ENCODE measurements at regions of chr12 and their contacts with region 1.

Region 1: DNA sequence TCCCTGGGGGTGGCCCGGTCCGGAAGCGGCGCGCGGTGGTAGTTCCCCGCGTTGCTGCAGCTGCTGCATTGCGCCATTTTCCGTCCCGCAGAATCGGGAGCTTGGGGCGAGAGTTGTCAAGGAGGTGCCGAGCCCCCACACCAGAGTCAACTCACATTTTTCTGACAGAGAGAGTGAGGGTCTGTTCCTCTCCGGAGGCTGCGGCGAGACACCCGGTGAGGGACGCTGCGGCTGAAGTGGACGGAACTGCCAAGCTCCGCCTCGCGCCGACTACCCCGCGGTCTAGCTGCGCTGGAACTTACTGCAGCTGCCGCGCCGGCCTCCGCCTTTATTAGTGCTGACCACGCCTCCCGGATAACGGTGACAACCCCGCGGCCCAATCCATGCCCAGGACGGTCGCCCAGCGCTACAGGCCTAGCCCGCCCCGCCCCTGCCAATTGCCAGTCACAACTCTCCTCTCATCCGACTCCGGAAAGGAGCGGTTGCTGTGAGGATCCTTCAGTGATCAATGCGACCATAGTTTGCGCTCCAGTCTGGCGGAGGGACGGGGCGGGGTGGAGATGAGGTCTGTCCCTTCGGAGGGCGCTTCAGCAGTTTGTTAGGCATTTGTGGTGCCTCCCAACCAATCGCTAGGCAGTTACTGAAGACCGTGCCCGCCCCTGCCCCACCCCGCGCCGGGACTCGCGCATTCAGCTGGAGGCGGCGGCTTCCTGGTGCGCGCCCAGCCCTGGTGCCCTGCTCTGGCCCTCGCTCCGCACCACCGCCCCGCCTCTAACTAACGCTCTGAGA is at the start of gene VAMP1:
- DNase-seq: peak; percentile 96
- H3K4me3 Mint-ChIP-seq: peak within 1 kb of the TSS; percentile 72
- H3K27ac Mint-ChIP-seq: peak within 1 kb of the TSS; percentile 87
- H3K4me1 Mint-ChIP-seq: peaks cover 13% of the 10 kb centered on the region
- H3K27me3 Mint-ChIP-seq: no peaks in the 10 kb centered on the region
- CTCF ChIP-seq: no peak
- total RNA-seq, gene VAMP1: 2.5 and 2.9 TPM in 2 replicates

Region 2: DNA sequence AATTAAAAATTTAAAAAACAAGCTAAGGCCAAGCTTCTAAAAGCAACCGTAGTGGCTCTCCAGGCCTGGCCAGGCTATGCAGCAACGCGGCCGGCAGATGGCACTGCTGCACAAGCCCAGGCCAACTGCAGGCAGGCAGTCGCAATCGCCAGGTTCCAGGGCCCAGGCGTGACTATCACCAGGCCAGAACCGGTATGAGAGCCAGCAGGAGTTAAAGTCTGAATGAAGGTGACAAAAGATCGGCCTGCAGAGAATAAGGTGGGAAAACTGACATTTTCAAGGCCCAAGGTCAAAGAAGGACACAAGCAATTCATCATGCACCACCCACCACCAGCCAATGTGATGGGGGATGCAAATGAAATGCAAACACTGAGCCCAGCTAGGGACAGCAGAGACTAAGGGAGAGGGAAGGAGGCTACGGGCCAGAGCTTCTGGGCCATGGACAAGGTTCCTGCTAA is 481.9 kb before region 1 on chr12:
- CTCF ChIA-PET with region 1: interaction called, 11 read pairs
- POLR2A ChIA-PET with region 1: no interaction called
- intact Hi-C with region 1: loop called (anchors 5 kb)
- DNase-seq: peak; percentile 66
- H3K4me3 Mint-ChIP-seq: no peak overlapping the region
- H3K27ac Mint-ChIP-seq: no peak overlapping the region
- H3K4me1 Mint-ChIP-seq: no peaks in the 10 kb centered on the region
- H3K27me3 Mint-ChIP-seq: no peaks in the 10 kb centered on the region
- CTCF ChIP-seq: peak; percentile 97

Region 3: GRCh38 chr12:6335451-6336078 is 135.0 kb before region 1 on chr12:
- CTCF ChIA-PET with region 1: interaction called, 13 read pairs
- POLR2A ChIA-PET with region 1: interaction called, 11 read pairs
- intact Hi-C with region 1: loop called (anchors 5 kb)
- DNase-seq: peak; percentile 85
- H3K4me3 Mint-ChIP-seq: no peak overlapping the region
- H3K27ac Mint-ChIP-seq: no peak overlapping the region
- H3K4me1 Mint-ChIP-seq: peaks cover 24% of the 10 kb centered on the region
- H3K27me3 Mint-ChIP-seq: no peaks in the 10 kb centered on the region
- CTCF ChIP-seq: peak; percentile 44

Region 4: GRCh38 chr12:6416596-6416995 is 54.0 kb before region 1 on chr12:
- CTCF ChIA-PET with region 1: interaction called, 59 read pairs
- POLR2A ChIA-PET with region 1: interaction called, 5 read pairs
- intact Hi-C with region 1: no loop called
- DNase-seq: no peak
- H3K4me3 Mint-ChIP-seq: no peak overlapping the region
- H3K27ac Mint-ChIP-seq: no peak overlapping the region
- H3K4me1 Mint-ChIP-seq: no peaks in the 10 kb centered on the region
- H3K27me3 Mint-ChIP-seq: no peaks in the 10 kb centered on the region
- CTCF ChIP-seq: no peak

Region 5: GRCh38 chr12:6435961-6436715 is 34.4 kb before region 1 on chr12:
- CTCF ChIA-PET with region 1: interaction called, 16 read pairs
- POLR2A ChIA-PET with region 1: interaction called, 13 read pairs
- intact Hi-C with region 1: no loop called
- DNase-seq: no peak
- H3K4me3 Mint-ChIP-seq: no peak overlapping the region
- H3K27ac Mint-ChIP-seq: no peak overlapping the region
- H3K4me1 Mint-ChIP-seq: peaks cover 5% of the 10 kb centered on the region
- H3K27me3 Mint-ChIP-seq: no peaks in the 10 kb centered on the region
- CTCF ChIP-seq: no peak

Region 6: GRCh38 chr12:6533923-6534694 is 63.5 kb after region 1 on chr12 and contains the start of gene GAPDH:
- CTCF ChIA-PET with region 1: interaction called, 47 read pairs
- POLR2A ChIA-PET with region 1: interaction called, 54 read pairs
- intact Hi-C with region 1: loop called (anchors 2 kb)
- DNase-seq: peak; percentile 98
- H3K4me3 Mint-ChIP-seq: peak within 1 kb of the TSS; percentile 88
- H3K27ac Mint-ChIP-seq: peak within 1 kb of the TSS; percentile 95
- H3K4me1 Mint-ChIP-seq: peaks cover 34% of the 10 kb centered on the region
- H3K27me3 Mint-ChIP-seq: no peaks in the 10 kb centered on the region
- CTCF ChIP-seq: no peak
- total RNA-seq, gene GAPDH: 2,995 and 4,097 TPM in 2 replicates

Region 7: DNA sequence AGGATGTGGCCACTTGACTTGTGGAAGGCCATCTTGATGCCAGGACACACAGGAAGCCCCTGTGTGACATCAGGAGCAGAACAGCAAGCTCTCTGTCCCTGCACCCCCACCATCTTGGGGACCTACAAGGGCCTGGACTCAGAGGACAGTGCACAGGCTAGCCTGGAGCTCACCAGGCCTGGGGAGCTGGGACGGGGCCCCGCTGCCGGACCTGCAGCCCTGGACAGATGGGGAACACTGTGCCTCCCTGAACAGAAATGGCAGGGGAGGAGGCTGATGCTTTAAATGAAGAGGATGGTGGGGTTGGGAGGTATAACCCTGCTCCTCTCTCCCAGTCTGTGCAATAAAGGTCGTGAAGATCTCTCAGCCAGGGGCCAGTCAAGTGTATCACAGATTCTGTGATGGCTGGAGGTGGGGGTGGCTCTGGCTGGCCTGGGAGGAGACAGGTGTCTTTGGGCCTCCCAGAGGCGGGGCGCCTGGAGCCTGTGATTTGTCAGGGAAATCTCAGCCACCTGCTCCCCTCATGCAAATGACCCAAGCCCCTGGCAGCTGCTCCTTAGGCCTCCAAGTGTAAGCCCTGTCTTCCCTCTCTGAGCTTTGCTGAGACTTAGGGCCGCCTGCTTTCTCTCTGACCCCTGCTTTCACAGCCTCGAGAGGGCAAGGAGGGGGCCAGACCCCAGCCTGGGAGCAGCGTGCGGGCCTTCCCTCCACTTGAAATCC is 369.1 kb after region 1 on chr12:
- CTCF ChIA-PET with region 1: no interaction called
- POLR2A ChIA-PET with region 1: no interaction called
- intact Hi-C with region 1: no loop called
- DNase-seq: no peak
- H3K4me3 Mint-ChIP-seq: no peak overlapping the region
- H3K27ac Mint-ChIP-seq: no peak overlapping the region
- H3K4me1 Mint-ChIP-seq: no peaks in the 10 kb centered on the region
- H3K27me3 Mint-ChIP-seq: no peaks in the 10 kb centered on the region
- CTCF ChIP-seq: no peak

Measured in MCF 10A (cell line).